ENCODE measurements at regions of chr6 and their contacts with region 1.

Region 1: GRCh38 chr6:27132532-27133280 is 114.8 kb upstream of the PRSS16 start:
- DNase-seq: peak; percentile 95 to 98
- H3K4me3 ChIP-seq: peak overlapping the region; percentile 89 to 98 (median 90)
- H3K27ac ChIP-seq: peak overlapping the region; percentile 96
- H3K4me1 ChIP-seq: peaks cover 0 to 5% (median 0%) of the 10 kb centered on the region in 4 experiments; a peak in 2 of 7 replicates
- H3K27me3 ChIP-seq: no peaks in the 10 kb centered on the region
- CTCF ChIP-seq: no peak
- EP300 ChIP-seq: no peak
- POLR2A ChIP-seq: peak; percentile 98 to 99
- RAD21 ChIP-seq: no peak

Region 2: GRCh38 chr6:26025894-26026832 is 1106.5 kb before region 1 on chr6:
- CTCF ChIA-PET with region 1: no interaction called
- POLR2A ChIA-PET with region 1: interaction called, 34 read pairs
- DNase-seq: peak; percentile 90 to 93
- H3K4me3 ChIP-seq: peak overlapping the region; percentile 75 to 89 (median 82)
- H3K27ac ChIP-seq: peak overlapping the region; percentile 80
- H3K4me1 ChIP-seq: peaks cover 3 to 26% (median 10%) of the 10 kb centered on the region in 4 experiments; a peak in 5 of 7 replicates
- H3K27me3 ChIP-seq: no peaks in the 10 kb centered on the region
- CTCF ChIP-seq: peak; percentile 63 to 93 (median 77)
- EP300 ChIP-seq: peak in 1 of 2 experiments; percentile 43; a peak in 1 of 3 replicates
- POLR2A ChIP-seq: peak; percentile 85 to 91; a peak in 2 of 3 replicates
- RAD21 ChIP-seq: peak; percentile 45 to 47

Region 3: DNA sequence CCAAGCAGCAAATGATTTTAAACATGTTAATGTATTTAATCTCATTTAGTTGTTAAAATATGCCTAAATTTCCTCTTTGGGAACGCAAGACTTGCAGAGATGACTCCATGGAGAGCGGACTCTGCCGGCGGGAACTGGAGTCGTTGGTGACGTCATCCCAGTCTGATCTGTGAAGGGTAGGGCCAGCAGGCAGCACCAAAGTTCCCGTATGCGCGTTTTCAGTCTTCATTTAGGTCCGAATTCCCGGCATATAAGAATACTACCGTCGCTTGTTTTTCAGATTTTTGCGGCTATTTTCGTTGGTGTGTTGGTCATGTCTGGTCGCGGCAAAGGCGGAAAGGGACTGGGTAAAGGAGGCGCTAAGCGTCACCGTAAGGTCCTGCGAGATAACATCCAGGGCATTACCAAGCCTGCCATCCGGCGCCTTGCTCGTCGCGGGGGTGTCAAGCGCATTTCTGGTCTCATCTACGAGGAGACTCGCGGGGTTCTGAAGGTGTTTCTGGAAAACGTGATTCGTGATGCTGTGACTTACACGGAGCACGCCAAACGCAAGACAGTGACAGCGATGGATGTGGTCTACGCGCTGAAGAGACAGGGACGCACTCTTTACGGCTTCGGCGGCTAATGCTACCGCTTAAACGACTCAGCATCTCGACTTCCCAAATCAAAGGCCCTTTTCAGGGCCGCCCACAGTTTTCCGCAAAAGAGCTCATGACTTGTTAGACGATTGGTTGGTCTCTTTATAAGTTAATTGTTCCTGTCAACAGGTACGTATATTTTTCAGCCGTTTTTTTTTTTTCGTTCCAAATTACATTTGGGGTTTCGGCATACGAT is 928.2 kb before region 1 on chr6:
- CTCF ChIA-PET with region 1: no interaction called
- POLR2A ChIA-PET with region 1: interaction called, 73 read pairs
- DNase-seq: peak; percentile 88 to 97
- H3K4me3 ChIP-seq: peak overlapping the region; percentile 64 to 94 (median 82)
- H3K27ac ChIP-seq: peak overlapping the region; percentile 98
- H3K4me1 ChIP-seq: peaks cover 0 to 15% (median 5%) of the 10 kb centered on the region in 4 experiments; a peak in 6 of 7 replicates
- H3K27me3 ChIP-seq: no peaks in the 10 kb centered on the region
- CTCF ChIP-seq: peak in 1 of 3 experiments; percentile 18; a peak in 1 of 4 replicates
- EP300 ChIP-seq: peak; percentile 13 to 95; a peak in 2 of 3 replicates
- POLR2A ChIP-seq: peak; percentile 99 to 100
- RAD21 ChIP-seq: 0 out of 4 replicates have a peak, but pooled peaks of 1 of the 2 experiments have one; percentile 14

Region 4: GRCh38 chr6:26240154-26241032 is 892.3 kb before region 1 on chr6:
- CTCF ChIA-PET with region 1: no interaction called
- POLR2A ChIA-PET with region 1: interaction called, 41 read pairs
- DNase-seq: peak in 1 of 2 experiments; percentile 78
- H3K4me3 ChIP-seq: peak overlapping the region; percentile 64 to 96 (median 87)
- H3K27ac ChIP-seq: peak overlapping the region; percentile 96
- H3K4me1 ChIP-seq: peaks cover 1 to 8% (median 4%) of the 10 kb centered on the region in 4 experiments; a peak in 6 of 7 replicates
- H3K27me3 ChIP-seq: no peaks in the 10 kb centered on the region
- CTCF ChIP-seq: no peak
- EP300 ChIP-seq: peak in 1 of 2 experiments; percentile 87; a peak in 1 of 3 replicates
- POLR2A ChIP-seq: peak; percentile 100
- RAD21 ChIP-seq: no peak

Region 5: DNA sequence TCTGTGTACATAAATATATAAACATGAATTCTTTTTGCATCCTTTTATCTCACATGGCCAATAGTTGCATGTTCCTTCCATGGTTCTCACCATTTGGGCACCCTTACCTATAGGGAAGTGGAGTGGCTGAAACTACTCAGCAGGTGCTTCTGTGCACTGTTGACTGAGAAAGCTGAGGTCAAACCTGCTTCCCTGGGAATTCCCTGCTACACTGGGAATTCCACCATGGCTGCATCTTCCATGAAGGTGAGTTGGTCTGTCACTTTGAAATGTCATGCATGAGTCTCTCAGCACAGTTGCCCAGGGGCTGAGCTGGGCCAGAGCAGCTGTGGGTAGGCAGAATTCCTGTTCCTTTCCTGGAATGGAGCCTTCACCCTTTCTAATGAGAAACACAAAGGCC is 79.0 kb before region 1 on chr6:
- CTCF ChIA-PET with region 1: no interaction called
- POLR2A ChIA-PET with region 1: no interaction called
- DNase-seq: no peak
- H3K4me3 ChIP-seq: no peak overlapping the region
- H3K27ac ChIP-seq: no peak overlapping the region
- H3K4me1 ChIP-seq: peaks cover 0 to 3% (median 0%) of the 10 kb centered on the region in 4 experiments; a peak in 1 of 7 replicates
- H3K27me3 ChIP-seq: no peaks in the 10 kb centered on the region
- CTCF ChIP-seq: no peak
- EP300 ChIP-seq: no peak
- POLR2A ChIP-seq: no peak
- RAD21 ChIP-seq: no peak

Region 6: GRCh38 chr6:27157459-27158315 is 25.0 kb after region 1 on chr6:
- CTCF ChIA-PET with region 1: interaction called, 4 read pairs
- POLR2A ChIA-PET with region 1: interaction called, 824 read pairs
- DNase-seq: peak in 1 of 2 experiments; percentile 77
- H3K4me3 ChIP-seq: peak overlapping the region; percentile 74 to 85 (median 84)
- H3K27ac ChIP-seq: no peak overlapping the region
- H3K4me1 ChIP-seq: peaks cover 2 to 11% (median 7%) of the 10 kb centered on the region in 4 experiments; a peak in 5 of 7 replicates
- H3K27me3 ChIP-seq: no peaks in the 10 kb centered on the region
- CTCF ChIP-seq: peak; percentile 33 to 65 (median 52)
- EP300 ChIP-seq: no peak
- POLR2A ChIP-seq: no peak
- RAD21 ChIP-seq: peak in 1 of 2 experiments; percentile 25; a peak in 2 of 4 replicates

Region 7: GRCh38 chr6:27838058-27838944 is 705.6 kb after region 1 on chr6:
- CTCF ChIA-PET with region 1: no interaction called
- POLR2A ChIA-PET with region 1: interaction called, 31 read pairs
- DNase-seq: peak; percentile 76 to 87
- H3K4me3 ChIP-seq: peak overlapping the region; percentile 77 to 96 (median 93)
- H3K27ac ChIP-seq: peak overlapping the region; percentile 98
- H3K4me1 ChIP-seq: peaks cover 0 to 5% (median 2%) of the 10 kb centered on the region in 4 experiments; a peak in 1 of 7 replicates
- H3K27me3 ChIP-seq: no peaks in the 10 kb centered on the region
- CTCF ChIP-seq: no peak
- EP300 ChIP-seq: no peak
- POLR2A ChIP-seq: peak; percentile 88 to 91
- RAD21 ChIP-seq: no peak